ENCODE measurements at regions of chr3 and their contacts with region 1.

Region 1: GRCh38 chr3:141114816-141115460 is 63.8 kb downstream of the SPSB4 start:
- DNase-seq: peak in 1 of 2 experiments; percentile 65
- H3K4me3 ChIP-seq: no peak overlapping the region
- H3K27ac ChIP-seq: no peak overlapping the region
- H3K4me1 ChIP-seq: no peaks in the 10 kb centered on the region
- H3K27me3 ChIP-seq: no peaks in the 10 kb centered on the region
- CTCF ChIP-seq: peak; percentile 65 to 81 (median 80)
- EP300 ChIP-seq: no peak
- POLR2A ChIP-seq: no peak
- RAD21 ChIP-seq: peak; percentile 55 to 70

Region 2: DNA sequence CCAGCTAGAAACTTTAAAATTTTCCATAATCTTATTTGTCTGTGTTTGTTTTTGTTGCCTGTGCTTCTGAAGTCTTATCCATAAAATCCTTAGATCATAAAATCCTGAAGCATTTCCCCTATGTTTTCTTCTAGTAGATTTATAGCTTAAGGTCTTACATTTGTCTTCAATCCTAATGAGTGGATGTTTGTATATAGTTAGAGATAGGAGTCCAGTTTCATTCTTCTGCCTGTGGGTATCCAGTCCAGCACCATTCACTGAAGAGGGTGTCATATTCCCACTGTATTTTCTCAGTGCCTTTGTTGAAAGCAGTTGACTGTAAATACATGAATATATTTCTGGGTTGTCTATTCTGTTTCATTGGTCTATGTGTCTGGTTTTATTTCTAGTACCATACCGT is 108.6 kb before region 1 on chr3:
- CTCF ChIA-PET with region 1: interaction called, 61 read pairs
- POLR2A ChIA-PET with region 1: no interaction called
- DNase-seq: no peak
- H3K4me3 ChIP-seq: no peak overlapping the region
- H3K27ac ChIP-seq: no peak overlapping the region
- H3K4me1 ChIP-seq: no peaks in the 10 kb centered on the region
- H3K27me3 ChIP-seq: peaks cover 0 to 2% (median 0%) of the 10 kb centered on the region in 4 experiments; a peak in 1 of 7 replicates
- CTCF ChIP-seq: no peak
- EP300 ChIP-seq: no peak
- POLR2A ChIP-seq: no peak
- RAD21 ChIP-seq: no peak

Region 3: GRCh38 chr3:141039589-141039988 is 75.3 kb before region 1 on chr3:
- CTCF ChIA-PET with region 1: interaction called, 23 read pairs
- POLR2A ChIA-PET with region 1: no interaction called
- DNase-seq: no peak
- H3K4me3 ChIP-seq: no peak overlapping the region
- H3K27ac ChIP-seq: no peak overlapping the region
- H3K4me1 ChIP-seq: no peaks in the 10 kb centered on the region; a peak in 1 of 7 replicates
- H3K27me3 ChIP-seq: no peaks in the 10 kb centered on the region
- CTCF ChIP-seq: no peak
- EP300 ChIP-seq: no peak
- POLR2A ChIP-seq: no peak
- RAD21 ChIP-seq: no peak

Region 4: DNA sequence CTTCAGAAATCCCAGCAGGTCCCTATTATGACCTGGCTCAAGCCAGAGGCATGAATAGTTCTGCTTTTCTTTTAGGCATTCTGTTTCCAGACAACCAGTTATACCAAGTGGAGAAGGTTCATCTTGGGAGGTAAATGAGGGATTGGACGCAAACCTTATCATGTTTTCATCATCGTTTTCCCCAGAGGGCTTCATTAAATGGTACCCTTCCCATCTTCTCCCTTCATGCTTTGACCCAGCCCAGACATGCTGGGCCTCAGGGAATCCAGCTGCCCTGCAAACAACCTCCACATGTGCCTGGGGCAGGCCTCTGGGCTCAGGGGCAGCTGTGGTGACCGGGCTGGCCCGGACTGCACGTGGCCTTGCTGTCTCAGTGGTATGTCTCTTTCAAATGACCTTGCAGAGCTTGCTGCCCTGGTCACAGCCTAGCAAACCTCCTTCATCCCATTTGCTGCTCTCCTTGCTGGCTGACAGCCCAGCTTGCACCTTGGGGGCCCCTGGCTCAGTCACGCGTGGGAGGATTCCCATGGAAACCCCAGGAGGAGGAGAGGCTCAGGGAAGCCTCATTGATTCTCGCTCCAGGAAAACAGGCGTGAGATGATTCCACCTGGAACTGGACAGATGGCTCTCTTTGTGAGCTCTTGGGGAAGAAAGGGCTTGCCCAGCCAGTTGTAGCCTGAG is 58.3 kb before region 1 on chr3:
- CTCF ChIA-PET with region 1: interaction called, 119 read pairs
- POLR2A ChIA-PET with region 1: no interaction called
- DNase-seq: no peak
- H3K4me3 ChIP-seq: no peak overlapping the region
- H3K27ac ChIP-seq: no peak overlapping the region
- H3K4me1 ChIP-seq: peaks cover 0 to 7% (median 3%) of the 10 kb centered on the region in 4 experiments; a peak in 3 of 7 replicates
- H3K27me3 ChIP-seq: peaks cover 0 to 11% (median 4%) of the 10 kb centered on the region in 4 experiments; a peak in 4 of 7 replicates
- CTCF ChIP-seq: no peak
- EP300 ChIP-seq: no peak
- POLR2A ChIP-seq: no peak
- RAD21 ChIP-seq: no peak

Region 5: DNA sequence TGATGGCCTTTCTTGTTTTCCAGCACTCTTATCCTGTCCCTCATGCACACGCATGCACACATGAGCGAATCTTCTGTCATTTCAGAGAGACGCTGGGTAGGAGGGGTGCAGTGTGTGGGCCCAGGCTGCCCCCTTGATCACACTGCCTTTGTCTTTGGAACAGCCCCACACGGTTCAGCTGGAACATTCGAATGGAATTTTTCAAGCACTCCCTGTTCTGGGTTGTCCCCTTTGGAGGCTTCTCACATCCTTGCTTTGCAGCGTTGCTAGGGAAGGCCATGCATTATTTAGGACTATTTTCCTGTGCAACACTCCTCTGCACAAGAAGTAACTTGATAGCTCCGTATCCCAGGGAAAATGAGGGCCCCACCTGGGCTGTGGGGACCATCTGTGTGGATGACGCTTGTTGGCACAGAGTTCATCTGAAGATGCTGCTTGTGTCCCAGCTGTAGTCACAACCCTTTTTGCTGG is 14.6 kb after region 1 on chr3:
- CTCF ChIA-PET with region 1: interaction called, 44 read pairs
- POLR2A ChIA-PET with region 1: interaction called, 3 read pairs
- DNase-seq: no peak
- H3K4me3 ChIP-seq: no peak overlapping the region
- H3K27ac ChIP-seq: no peak overlapping the region
- H3K4me1 ChIP-seq: no peaks in the 10 kb centered on the region
- H3K27me3 ChIP-seq: no peaks in the 10 kb centered on the region
- CTCF ChIP-seq: no peak
- EP300 ChIP-seq: no peak
- POLR2A ChIP-seq: no peak
- RAD21 ChIP-seq: no peak

Region 6: GRCh38 chr3:141192345-141192744 is 77.4 kb after region 1 on chr3:
- CTCF ChIA-PET with region 1: interaction called, 13 read pairs
- POLR2A ChIA-PET with region 1: no interaction called
- DNase-seq: peak; percentile 88 to 100
- H3K4me3 ChIP-seq: no peak overlapping the region
- H3K27ac ChIP-seq: no peak overlapping the region
- H3K4me1 ChIP-seq: no peaks in the 10 kb centered on the region
- H3K27me3 ChIP-seq: no peaks in the 10 kb centered on the region
- CTCF ChIP-seq: peak; percentile 89 to 99 (median 99)
- EP300 ChIP-seq: no peak
- POLR2A ChIP-seq: no peak
- RAD21 ChIP-seq: peak; percentile 100

Region 7: DNA sequence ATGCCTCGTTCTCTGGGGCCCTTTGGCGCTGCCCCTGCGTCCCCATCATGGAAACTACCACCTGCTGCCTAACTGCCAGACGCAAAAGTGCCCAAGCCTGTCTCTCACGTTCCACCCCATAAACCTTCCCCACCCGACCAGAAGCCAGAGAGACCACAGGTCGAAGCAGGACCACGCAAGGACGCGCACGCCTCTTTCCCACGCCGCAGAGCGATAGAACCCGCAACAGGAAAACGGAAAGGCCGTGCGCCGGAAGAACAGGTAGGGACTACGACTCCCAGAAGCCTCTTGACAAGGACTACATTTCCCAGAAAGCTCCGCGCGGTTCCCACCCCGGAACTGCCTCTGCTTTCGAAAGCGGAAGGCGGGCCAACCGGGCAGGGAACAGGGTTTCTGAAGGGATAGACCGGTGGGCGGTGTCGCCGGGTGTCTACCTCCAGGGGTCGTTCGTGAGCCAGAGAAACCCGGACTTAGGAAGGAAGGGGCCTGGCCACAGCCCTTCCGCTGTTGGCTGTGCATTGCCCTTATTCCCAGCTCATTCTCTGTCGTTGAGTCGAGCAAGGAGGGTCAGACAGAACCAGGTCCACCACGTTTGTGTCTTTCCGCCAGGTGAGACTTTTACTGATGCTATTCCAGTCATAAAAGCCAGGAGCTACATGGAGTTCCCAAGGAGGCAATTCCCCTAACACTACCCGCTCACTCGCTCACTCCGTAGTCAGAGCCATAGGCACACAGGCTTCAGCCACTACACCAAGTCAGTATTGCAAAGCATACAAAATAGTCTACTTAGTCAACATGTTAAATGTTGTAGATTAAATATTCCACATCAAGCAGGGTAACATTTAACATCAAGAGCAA is 196.8 kb after region 1 on chr3:
- CTCF ChIA-PET with region 1: no interaction called
- POLR2A ChIA-PET with region 1: no interaction called
- DNase-seq: peak; percentile 94 to 98
- H3K4me3 ChIP-seq: peak overlapping the region; percentile 69 to 99 (median 85)
- H3K27ac ChIP-seq: no peak overlapping the region
- H3K4me1 ChIP-seq: peaks cover 0 to 4% (median 2%) of the 10 kb centered on the region in 4 experiments; a peak in 4 of 7 replicates
- H3K27me3 ChIP-seq: peaks cover 0 to 7% (median 3%) of the 10 kb centered on the region in 4 experiments; a peak in 1 of 7 replicates
- CTCF ChIP-seq: peak; percentile 74 to 91 (median 84)
- EP300 ChIP-seq: no peak
- POLR2A ChIP-seq: peak; percentile 34 to 73
- RAD21 ChIP-seq: peak; percentile 89